ENCODE measurements at regions of chr11 and their contacts with region 1.

Region 1: GRCh38 chr11:93921695-93922468 is 71.5 kb upstream of the VSTM5 start:
- DNase-seq: peak; percentile 72
- ATAC-seq: peak; percentile 96
- H3K4me3 ChIP-seq: no peak overlapping the region
- H3K27ac ChIP-seq: no peak overlapping the region
- H3K4me1 ChIP-seq: no peaks in the 10 kb centered on the region
- H3K27me3 ChIP-seq: peaks cover 7% of the 10 kb centered on the region
- CTCF ChIP-seq: peak; percentile 83
- POLR2A ChIP-seq: no peak
- RAD21 ChIP-seq: peak; percentile 92

Region 2: DNA sequence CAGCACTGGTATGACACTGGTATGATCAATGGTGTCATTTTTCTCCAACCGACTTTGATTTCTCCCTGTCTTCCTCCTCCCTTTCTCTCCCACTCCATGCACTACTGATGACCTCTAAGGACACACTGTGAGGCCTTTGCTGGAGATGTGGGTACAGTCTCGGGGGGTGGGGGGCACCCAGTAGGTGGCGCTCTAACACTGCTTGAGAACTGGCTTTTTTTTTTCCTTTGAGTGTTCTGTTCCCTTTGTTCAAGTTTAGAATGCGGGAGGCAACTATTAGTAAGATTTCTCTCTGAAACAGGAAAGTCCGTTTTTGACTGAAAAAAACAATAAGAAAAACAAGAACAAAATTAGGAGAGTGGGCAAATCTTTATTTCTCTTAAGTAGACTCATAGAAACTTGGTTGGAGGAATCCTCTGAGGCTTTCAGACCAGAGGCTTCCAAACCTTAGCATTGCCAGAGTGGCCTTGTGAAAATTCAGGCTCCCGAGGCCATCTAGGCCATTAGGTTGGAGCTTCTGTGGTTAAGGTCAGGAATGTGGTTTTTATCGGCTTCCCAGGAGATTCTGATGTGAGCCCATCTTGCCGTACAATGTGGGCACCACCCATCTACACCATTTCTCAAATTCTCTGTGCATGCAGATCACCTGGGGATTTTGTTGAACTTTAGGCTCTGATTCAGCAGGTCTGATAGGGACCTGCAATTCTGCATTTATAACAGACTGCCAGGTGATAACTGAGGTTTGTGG is 250.0 kb after region 1 on chr11:
- CTCF ChIA-PET with region 1: no interaction called
- POLR2A ChIA-PET with region 1: no interaction called
- dilution Hi-C with region 1: no loop called
- in situ Hi-C with region 1: loop called (anchors 10 kb)
- intact Hi-C with region 1: no loop called
- DNase-seq: peak; percentile 50
- ATAC-seq: peak; percentile 41; the same call in 1 of the 2 replicates
- H3K4me3 ChIP-seq: no peak overlapping the region
- H3K27ac ChIP-seq: no peak overlapping the region
- H3K4me1 ChIP-seq: peaks cover 9% of the 10 kb centered on the region
- H3K27me3 ChIP-seq: no peaks in the 10 kb centered on the region
- CTCF ChIP-seq: peak; percentile 80
- POLR2A ChIP-seq: no peak
- RAD21 ChIP-seq: peak; percentile 81

Region 3: DNA sequence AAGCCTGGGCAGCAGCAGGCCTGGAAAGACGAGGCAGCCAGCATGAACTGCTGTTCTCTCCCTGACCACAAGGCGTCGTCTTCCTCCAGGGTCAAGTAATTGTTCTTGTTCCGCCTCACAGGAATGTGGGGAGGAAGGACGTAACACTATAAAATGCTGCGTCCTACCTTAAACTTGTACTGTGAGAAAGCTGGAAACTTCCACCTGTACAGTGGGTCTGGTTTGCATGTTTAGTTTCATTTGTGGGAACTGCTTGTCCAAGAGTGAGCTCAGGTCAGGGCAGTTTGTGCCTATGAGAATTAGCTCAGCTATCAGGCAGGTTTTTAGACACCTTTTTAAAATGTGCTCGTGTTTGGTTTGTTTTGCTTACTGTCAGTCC is 262.0 kb after region 1 on chr11:
- CTCF ChIA-PET with region 1: interaction called, 5 read pairs
- POLR2A ChIA-PET with region 1: no interaction called
- dilution Hi-C with region 1: no loop called
- in situ Hi-C with region 1: loop called (anchors 10 kb)
- intact Hi-C with region 1: loop called (anchors 1 kb)
- DNase-seq: peak; percentile 67
- ATAC-seq: peak; percentile 22; the same call in 1 of the 2 replicates
- H3K4me3 ChIP-seq: no peak overlapping the region
- H3K27ac ChIP-seq: no peak overlapping the region
- H3K4me1 ChIP-seq: peaks cover 26% of the 10 kb centered on the region
- H3K27me3 ChIP-seq: no peaks in the 10 kb centered on the region
- CTCF ChIP-seq: peak; percentile 67
- POLR2A ChIP-seq: no peak
- RAD21 ChIP-seq: peak; percentile 71

Region 4: GRCh38 chr11:94417386-94417987 is 495.6 kb after region 1 on chr11:
- CTCF ChIA-PET with region 1: interaction called, 8 read pairs
- POLR2A ChIA-PET with region 1: no interaction called
- dilution Hi-C with region 1: no loop called
- in situ Hi-C with region 1: no loop called
- intact Hi-C with region 1: loop called (anchors 1 kb)
- DNase-seq: peak; percentile 59
- ATAC-seq: peak; percentile 73
- H3K4me3 ChIP-seq: no peak overlapping the region
- H3K27ac ChIP-seq: no peak overlapping the region
- H3K4me1 ChIP-seq: no peaks in the 10 kb centered on the region
- H3K27me3 ChIP-seq: no peaks in the 10 kb centered on the region
- CTCF ChIP-seq: peak; percentile 70
- POLR2A ChIP-seq: no peak
- RAD21 ChIP-seq: peak; percentile 70

Region 5: DNA sequence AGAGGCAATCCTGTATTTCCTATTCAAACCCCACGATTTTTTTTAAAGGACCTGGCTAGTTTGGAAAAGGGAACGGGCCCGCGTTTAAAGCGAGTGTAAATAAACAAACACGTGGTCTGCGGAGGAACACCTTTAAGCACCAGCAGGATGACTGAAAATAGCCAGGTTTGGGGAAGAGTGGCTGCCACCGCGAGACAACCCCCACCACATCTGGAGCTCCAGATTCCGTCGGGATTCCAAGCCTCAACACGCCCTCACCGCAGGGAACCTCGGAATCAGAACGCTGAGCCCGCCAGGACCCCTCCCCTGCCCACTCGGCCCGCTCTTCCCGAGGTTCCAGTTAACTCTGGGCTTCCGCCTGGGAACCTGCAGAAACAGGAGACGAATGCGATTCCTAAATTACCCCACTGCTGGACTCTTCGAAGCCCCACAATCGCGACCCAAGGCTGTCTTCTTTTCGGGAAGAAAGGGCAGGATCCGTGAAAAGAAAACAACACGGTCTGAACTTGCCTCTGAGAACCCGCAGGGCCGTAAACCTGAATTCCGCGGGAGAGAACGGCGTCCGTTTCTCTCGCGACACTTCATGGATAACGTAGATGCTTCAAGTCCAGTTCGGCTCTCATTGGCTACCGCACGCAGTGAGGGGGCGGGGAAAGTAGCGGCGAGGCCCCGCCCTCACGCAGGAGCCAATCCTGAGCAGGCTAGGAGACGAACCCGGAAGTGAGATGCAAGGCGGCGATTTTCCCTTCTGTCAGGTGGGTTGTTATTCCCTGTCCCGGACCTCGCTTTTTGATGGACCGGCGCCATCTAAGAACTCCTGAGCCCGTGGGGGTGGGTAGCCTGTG is 571.6 kb after region 1 on chr11 and contains the starts of genes ANKRD49 and MRE11:
- CTCF ChIA-PET with region 1: interaction called, 4 read pairs
- POLR2A ChIA-PET with region 1: no interaction called
- dilution Hi-C with region 1: no loop called
- in situ Hi-C with region 1: no loop called
- intact Hi-C with region 1: loop called (anchors 2 kb)
- DNase-seq: peak; percentile 98
- ATAC-seq: peak; percentile 100
- H3K4me3 ChIP-seq: peak within 1 kb of the TSS; percentile 77
- H3K27ac ChIP-seq: peak within 1 kb of the TSS; percentile 60
- H3K4me1 ChIP-seq: no peaks in the 10 kb centered on the region
- H3K27me3 ChIP-seq: no peaks in the 10 kb centered on the region
- CTCF ChIP-seq: no peak
- POLR2A ChIP-seq: peak; percentile 68; the same call in 1 of the 2 replicates
- RAD21 ChIP-seq: no peak
- total RNA-seq, gene ANKRD49: 10.4 and 15.8 TPM in 2 replicates
- total RNA-seq, gene MRE11: 15.6 and 22.2 TPM in 2 replicates

Region 6: DNA sequence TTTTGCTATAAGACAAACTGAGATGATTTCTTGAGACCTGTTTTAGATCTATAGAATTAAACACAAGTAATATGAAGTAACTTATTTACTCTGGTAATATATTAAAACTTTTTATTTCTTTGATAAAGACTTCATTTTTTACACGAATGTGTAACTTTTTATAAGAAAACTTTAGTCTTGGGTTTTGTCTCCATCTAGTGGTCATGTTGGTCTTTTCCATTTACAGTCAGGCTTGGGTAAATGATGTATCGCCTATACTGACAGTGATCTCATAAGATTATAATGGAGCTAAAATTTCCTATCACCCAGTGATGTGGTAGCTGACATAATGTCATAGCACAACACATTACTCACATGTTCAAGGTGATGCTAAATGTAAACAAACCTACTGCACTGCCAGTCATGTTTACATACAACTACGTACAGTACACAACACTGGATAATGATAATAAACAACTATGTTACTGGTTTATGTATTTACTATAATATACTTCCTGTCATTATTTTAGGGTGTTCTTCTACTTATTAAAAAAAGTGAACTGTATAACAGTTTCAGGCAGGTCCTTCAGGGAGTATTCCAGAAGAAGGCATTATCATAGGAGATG is 582.9 kb after region 1 on chr11:
- CTCF ChIA-PET with region 1: interaction called, 3 read pairs
- POLR2A ChIA-PET with region 1: no interaction called
- dilution Hi-C with region 1: no loop called
- in situ Hi-C with region 1: no loop called
- intact Hi-C with region 1: loop called (anchors 2 kb)
- DNase-seq: peak; percentile 68
- ATAC-seq: peak; percentile 67
- H3K4me3 ChIP-seq: no peak overlapping the region
- H3K27ac ChIP-seq: no peak overlapping the region
- H3K4me1 ChIP-seq: no peaks in the 10 kb centered on the region
- H3K27me3 ChIP-seq: no peaks in the 10 kb centered on the region; the same call in 1 of the 2 replicates
- CTCF ChIP-seq: peak; percentile 75
- POLR2A ChIP-seq: no peak
- RAD21 ChIP-seq: peak; percentile 78

Measured in IMR-90 (cell line).